Panc1 (cell line): ENCODE measurements at regions of chr3 and their contacts with region 1.

Region 1: GRCh38 chr3:111851511-111851954 is 7.5 kb upstream of the PHLDB2 start:
- DNase-seq: no peak
- ATAC-seq: peak; percentile 76; the same call in 1 of the 2 replicates
- H3K4me3 ChIP-seq: no peak overlapping the region
- H3K27ac ChIP-seq: no peak overlapping the region
- H3K4me1 ChIP-seq: no peaks in the 10 kb centered on the region
- H3K27me3 ChIP-seq: no peaks in the 10 kb centered on the region; the same call in 1 of the 2 replicates
- CTCF ChIP-seq: no peak

Region 2: DNA sequence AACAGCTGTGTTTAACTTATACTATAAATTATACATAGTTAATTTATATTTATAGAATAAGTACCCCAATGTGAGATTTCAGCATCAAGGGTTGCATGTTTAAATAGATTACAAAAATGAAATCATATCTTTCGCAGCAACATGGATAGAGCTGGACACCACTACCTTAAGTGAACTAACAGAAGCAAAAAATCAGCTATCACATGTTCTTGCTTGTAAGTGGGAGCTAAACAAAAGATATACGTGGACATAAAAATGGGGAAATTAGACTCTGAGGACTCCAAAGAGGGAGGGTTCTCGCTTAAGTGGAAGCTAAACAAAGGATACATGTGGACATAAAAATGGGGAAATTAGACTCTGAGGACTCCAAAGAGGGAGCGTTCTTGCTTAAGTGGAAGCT is 1887.7 kb before region 1 on chr3:
- CTCF ChIA-PET with region 1: no interaction called
- POLR2A ChIA-PET with region 1: interaction called, 10 read pairs
- in situ Hi-C with region 1: no loop called
- intact Hi-C with region 1: no loop called
- DNase-seq: no peak
- ATAC-seq: no peak
- H3K4me3 ChIP-seq: no peak overlapping the region
- H3K27ac ChIP-seq: no peak overlapping the region
- H3K4me1 ChIP-seq: no peaks in the 10 kb centered on the region
- H3K27me3 ChIP-seq: no peaks in the 10 kb centered on the region
- CTCF ChIP-seq: no peak

Region 3: DNA sequence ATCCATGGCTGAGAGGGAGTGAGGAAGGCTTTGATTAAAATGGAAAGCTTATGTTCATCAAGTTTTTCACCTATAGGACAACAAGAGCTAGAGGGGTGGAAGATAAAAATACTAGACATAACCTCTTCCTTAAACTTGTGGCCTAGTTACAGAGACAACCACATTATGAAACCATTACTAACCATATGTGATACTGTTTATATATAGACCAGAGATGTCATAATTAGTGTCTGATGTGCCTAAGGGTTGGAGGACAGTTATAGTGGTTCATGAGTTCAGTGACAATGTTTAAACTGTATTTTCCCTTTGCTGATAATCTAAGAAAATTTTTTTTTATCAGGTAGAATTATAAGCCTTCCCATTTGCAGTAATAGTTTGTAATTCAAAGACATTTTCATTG is 31.3 kb after region 1 on chr3:
- CTCF ChIA-PET with region 1: no interaction called
- POLR2A ChIA-PET with region 1: interaction called, 10 read pairs
- in situ Hi-C with region 1: no loop called
- intact Hi-C with region 1: no loop called
- DNase-seq: no peak
- ATAC-seq: no peak
- H3K4me3 ChIP-seq: no peak overlapping the region
- H3K27ac ChIP-seq: no peak overlapping the region
- H3K4me1 ChIP-seq: no peaks in the 10 kb centered on the region
- H3K27me3 ChIP-seq: no peaks in the 10 kb centered on the region
- CTCF ChIP-seq: no peak

Region 4: DNA sequence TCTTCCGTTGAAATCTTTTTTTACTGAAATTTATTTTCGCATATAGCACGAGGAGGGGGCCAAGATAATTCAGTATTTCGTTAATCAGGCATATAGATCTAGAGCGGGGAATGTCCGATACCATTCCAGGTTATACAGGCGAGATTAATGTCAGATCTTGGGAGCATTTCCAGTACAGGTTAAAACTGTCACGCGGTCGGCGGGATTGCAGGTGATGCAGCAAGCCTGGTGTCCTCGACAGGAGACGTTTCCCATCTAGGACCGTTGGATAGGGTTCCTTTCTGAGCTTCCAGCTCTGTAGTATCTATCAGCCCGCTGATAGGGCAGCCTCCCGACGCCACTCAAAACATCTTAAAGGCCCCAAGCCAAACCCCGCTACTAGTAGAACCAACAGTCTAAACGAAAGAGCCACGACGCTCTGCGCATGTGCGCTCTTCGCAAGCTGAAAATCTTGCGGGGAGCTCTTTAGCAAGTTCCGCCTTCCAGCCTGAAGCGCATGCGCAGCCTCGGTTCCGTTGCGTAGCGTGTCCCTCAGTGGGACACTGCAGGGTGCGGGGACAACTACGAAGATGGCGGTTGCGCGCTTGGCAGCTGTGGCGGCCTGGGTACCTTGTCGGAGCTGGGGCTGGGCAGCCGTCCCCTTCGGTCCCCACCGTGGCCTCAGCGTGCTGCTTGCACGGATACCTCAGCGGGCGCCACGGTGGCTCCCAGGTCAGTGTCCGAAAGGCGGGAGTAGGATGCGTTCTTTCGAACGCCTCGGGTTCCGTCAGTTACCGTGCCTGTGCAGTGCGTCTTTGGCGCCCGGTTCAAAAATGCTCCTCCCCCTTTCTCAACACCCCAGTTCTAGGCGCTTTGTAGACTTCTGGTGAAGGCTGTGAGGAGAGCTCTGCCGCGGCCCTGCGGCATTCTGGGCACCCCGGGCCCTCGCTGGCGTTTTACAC is 127.2 kb after region 1 on chr3 and contains the start of gene ABHD10:
- CTCF ChIA-PET with region 1: no interaction called
- POLR2A ChIA-PET with region 1: no interaction called
- in situ Hi-C with region 1: no loop called
- intact Hi-C with region 1: no loop called
- DNase-seq: peak; percentile 94
- ATAC-seq: peak; percentile 99
- H3K4me3 ChIP-seq: peak within 1 kb of the TSS; percentile 74 to 88
- H3K27ac ChIP-seq: peak within 1 kb of the TSS; percentile 87
- H3K4me1 ChIP-seq: peaks cover 11% of the 10 kb centered on the region; the same call in 1 of the 2 replicates
- H3K27me3 ChIP-seq: peaks cover 10% of the 10 kb centered on the region; the same call in 1 of the 2 replicates
- CTCF ChIP-seq: no peak
- total RNA-seq, gene ABHD10: 30.3 TPM

Region 5: DNA sequence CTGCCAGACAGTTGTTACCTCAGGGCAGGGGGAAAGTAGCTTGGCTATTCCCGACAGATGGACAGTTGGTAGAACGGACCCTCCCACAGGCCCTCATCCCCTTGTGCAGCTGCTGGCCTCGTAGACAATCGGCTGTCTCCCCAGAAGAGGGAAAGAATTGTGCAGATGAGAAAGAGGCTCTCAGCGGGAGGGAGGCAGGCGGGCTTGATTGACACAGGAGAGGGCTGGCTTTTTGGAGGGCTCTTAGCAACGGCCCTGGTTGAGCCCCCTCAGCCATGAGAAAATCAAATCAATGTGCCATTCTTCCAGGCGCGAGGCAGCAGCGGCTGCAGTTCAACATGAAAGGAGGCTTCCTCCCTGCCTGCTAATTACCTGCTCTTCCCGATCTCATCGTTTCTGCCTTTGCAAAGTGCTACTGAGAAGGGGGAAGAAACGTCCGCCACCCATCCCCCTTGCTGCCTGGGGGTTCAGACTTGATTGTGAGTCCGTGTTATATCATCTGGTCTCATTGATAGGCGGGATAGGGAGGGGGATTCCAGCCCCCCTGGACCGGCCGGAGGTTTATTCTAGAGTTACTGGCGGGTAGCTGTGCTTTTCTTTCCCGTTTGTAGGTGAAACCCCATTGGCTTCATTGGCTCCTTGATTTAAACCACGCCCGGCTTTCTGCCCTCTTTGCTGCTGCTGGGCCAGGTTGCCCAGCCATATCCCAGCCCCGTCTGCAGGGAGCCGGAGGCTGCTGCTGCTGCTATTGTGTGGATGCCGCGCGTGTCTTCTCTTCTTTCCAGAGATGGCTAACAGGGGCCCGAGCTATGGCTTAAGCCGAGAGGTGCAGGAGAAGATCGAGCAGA is 147.3 kb after region 1 on chr3 and contains the start of gene TAGLN3:
- CTCF ChIA-PET with region 1: interaction called, 10 read pairs
- POLR2A ChIA-PET with region 1: no interaction called
- in situ Hi-C with region 1: no loop called
- intact Hi-C with region 1: no loop called
- DNase-seq: no peak
- ATAC-seq: peak; percentile 70
- H3K4me3 ChIP-seq: peak within 1 kb of the TSS; percentile 38 to 53
- H3K27ac ChIP-seq: no peak within 1 kb of the TSS
- H3K4me1 ChIP-seq: no peaks in the 10 kb centered on the region
- H3K27me3 ChIP-seq: no peaks in the 10 kb centered on the region
- CTCF ChIP-seq: no peak
- total RNA-seq, gene TAGLN3: not detected

Region 6: GRCh38 chr3:112128843-112129727 is 277.6 kb after region 1 on chr3:
- CTCF ChIA-PET with region 1: no interaction called
- POLR2A ChIA-PET with region 1: no interaction called
- in situ Hi-C with region 1: no loop called
- intact Hi-C with region 1: no loop called
- DNase-seq: no peak
- ATAC-seq: no peak
- H3K4me3 ChIP-seq: no peak overlapping the region
- H3K27ac ChIP-seq: no peak overlapping the region
- H3K4me1 ChIP-seq: no peaks in the 10 kb centered on the region; the same call in 1 of the 2 replicates
- H3K27me3 ChIP-seq: no peaks in the 10 kb centered on the region
- CTCF ChIP-seq: no peak